ENCODE measurements at regions of chr2 and their contacts with region 1.

Region 1: GRCh38 chr2:234463626-234464290 is 33.1 kb downstream of the ARL4C start:
- DNase-seq: peak; percentile 85
- ATAC-seq: peak; percentile 82
- H3K4me3 Mint-ChIP-seq: peak overlapping the region; percentile 56
- H3K27ac Mint-ChIP-seq: peak overlapping the region; percentile 81
- H3K4me1 Mint-ChIP-seq: peaks cover 76% of the 10 kb centered on the region
- H3K27me3 Mint-ChIP-seq: no peaks in the 10 kb centered on the region

Region 2: GRCh38 chr2:234308813-234309195 is 155.0 kb before region 1 on chr2:
- CTCF ChIA-PET with region 1: interaction called, 6 read pairs
- POLR2A ChIA-PET with region 1: interaction called, 3 read pairs
- intact Hi-C with region 1: loop called in 1 of 2 experiments (anchors 1 kb)
- DNase-seq: peak; percentile 86
- ATAC-seq: peak; percentile 86
- H3K4me3 Mint-ChIP-seq: peak overlapping the region; percentile 42
- H3K27ac Mint-ChIP-seq: peak overlapping the region; percentile 99
- H3K4me1 Mint-ChIP-seq: peaks cover 66% of the 10 kb centered on the region
- H3K27me3 Mint-ChIP-seq: no peaks in the 10 kb centered on the region

Region 3: GRCh38 chr2:234446404-234447076 is 17.2 kb before region 1 on chr2:
- CTCF ChIA-PET with region 1: interaction called, 12 read pairs
- POLR2A ChIA-PET with region 1: interaction called, 6 read pairs
- intact Hi-C with region 1: no loop called
- DNase-seq: peak; percentile 86
- ATAC-seq: peak; percentile 89
- H3K4me3 Mint-ChIP-seq: peak overlapping the region; percentile 61
- H3K27ac Mint-ChIP-seq: peak overlapping the region; percentile 94
- H3K4me1 Mint-ChIP-seq: peaks cover 93% of the 10 kb centered on the region
- H3K27me3 Mint-ChIP-seq: no peaks in the 10 kb centered on the region

Region 4: GRCh38 chr2:234451852-234452625 is 11.7 kb before region 1 on chr2:
- CTCF ChIA-PET with region 1: interaction called, 12 read pairs
- POLR2A ChIA-PET with region 1: interaction called, 6 read pairs
- intact Hi-C with region 1: loop called in 1 of 2 experiments (anchors 1 kb)
- DNase-seq: no peak
- ATAC-seq: peak; percentile 34
- H3K4me3 Mint-ChIP-seq: peak overlapping the region; percentile 79
- H3K27ac Mint-ChIP-seq: peak overlapping the region; percentile 93
- H3K4me1 Mint-ChIP-seq: peaks cover 85% of the 10 kb centered on the region
- H3K27me3 Mint-ChIP-seq: no peaks in the 10 kb centered on the region

Region 5: GRCh38 chr2:234478121-234478858 is 14.5 kb after region 1 on chr2:
- CTCF ChIA-PET with region 1: interaction called, 7 read pairs
- POLR2A ChIA-PET with region 1: no interaction called
- intact Hi-C with region 1: loop called in 1 of 2 experiments (anchors 1 kb)
- DNase-seq: peak; percentile 69
- ATAC-seq: peak; percentile 62
- H3K4me3 Mint-ChIP-seq: no peak overlapping the region
- H3K27ac Mint-ChIP-seq: peak overlapping the region; percentile 49
- H3K4me1 Mint-ChIP-seq: peaks cover 77% of the 10 kb centered on the region
- H3K27me3 Mint-ChIP-seq: no peaks in the 10 kb centered on the region

Region 6: GRCh38 chr2:234483568-234484251 is 20.0 kb after region 1 on chr2:
- CTCF ChIA-PET with region 1: interaction called, 7 read pairs
- POLR2A ChIA-PET with region 1: no interaction called
- intact Hi-C with region 1: loop called (anchors 1 kb)
- DNase-seq: peak; percentile 86
- ATAC-seq: peak; percentile 78
- H3K4me3 Mint-ChIP-seq: peak overlapping the region; percentile 39
- H3K27ac Mint-ChIP-seq: peak overlapping the region; percentile 88
- H3K4me1 Mint-ChIP-seq: peaks cover 87% of the 10 kb centered on the region
- H3K27me3 Mint-ChIP-seq: no peaks in the 10 kb centered on the region

Region 7: DNA sequence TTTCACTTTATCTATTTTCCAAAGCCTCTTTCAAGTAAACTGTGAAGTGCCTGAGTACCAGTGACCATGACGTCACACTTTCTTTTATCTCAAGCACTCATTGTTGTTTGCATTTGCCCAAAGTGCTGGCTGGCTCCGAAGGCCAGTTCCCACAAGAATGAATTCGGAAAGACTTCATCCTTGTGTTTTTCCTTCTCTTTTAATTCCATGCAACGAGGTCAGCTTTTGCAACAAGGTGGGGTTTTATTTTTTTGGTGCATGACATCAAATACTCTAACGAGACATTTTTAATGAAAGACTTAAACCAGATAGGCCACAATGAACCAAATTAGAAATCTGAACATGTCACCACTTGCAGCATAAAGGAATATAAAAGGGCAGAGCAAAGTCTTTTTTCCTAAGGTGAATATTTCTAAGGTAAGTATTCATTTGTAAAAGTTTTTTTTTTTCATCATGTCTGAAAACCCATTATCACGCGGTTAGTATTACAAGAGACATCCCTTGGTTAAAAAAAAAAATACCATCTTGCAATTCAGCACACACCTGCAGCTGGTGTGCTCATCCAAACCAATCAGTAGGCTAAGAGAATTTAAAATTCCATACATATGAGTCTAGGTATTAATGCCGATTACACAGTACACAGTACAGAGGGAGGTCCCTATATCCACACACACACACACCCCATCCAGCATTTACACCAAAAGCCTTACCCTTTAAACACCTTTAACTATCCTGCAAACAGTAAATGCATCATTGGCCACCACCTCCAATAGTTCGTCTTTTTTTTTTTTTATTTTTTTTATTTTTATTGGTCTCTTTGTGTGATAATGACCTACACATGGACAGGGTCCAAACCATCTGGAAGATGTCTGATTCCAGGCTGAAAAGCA is 30.8 kb after region 1 on chr2:
- CTCF ChIA-PET with region 1: interaction called, 3 read pairs
- POLR2A ChIA-PET with region 1: interaction called, 3 read pairs
- intact Hi-C with region 1: loop called in 1 of 2 experiments (anchors 1 kb)
- DNase-seq: no peak
- ATAC-seq: no peak
- H3K4me3 Mint-ChIP-seq: peak overlapping the region; percentile 96
- H3K27ac Mint-ChIP-seq: peak overlapping the region; percentile 98
- H3K4me1 Mint-ChIP-seq: peaks cover 49% of the 10 kb centered on the region
- H3K27me3 Mint-ChIP-seq: no peaks in the 10 kb centered on the region

Region 8: GRCh38 chr2:234745347-234745746 is 281.6 kb after region 1 on chr2:
- CTCF ChIA-PET with region 1: no interaction called
- POLR2A ChIA-PET with region 1: no interaction called
- intact Hi-C with region 1: no loop called
- DNase-seq: no peak
- ATAC-seq: no peak
- H3K4me3 Mint-ChIP-seq: no peak overlapping the region
- H3K27ac Mint-ChIP-seq: no peak overlapping the region
- H3K4me1 Mint-ChIP-seq: no peaks in the 10 kb centered on the region
- H3K27me3 Mint-ChIP-seq: peaks cover 25% of the 10 kb centered on the region